ENCODE measurements at regions of chr22 and their contacts with region 1.

Region 1: GRCh38 chr22:43230971-43231723 is 44.2 kb upstream of the TTLL12 start:
- DNase-seq: no peak
- ATAC-seq: peak; percentile 84
- H3K4me3 ChIP-seq: no peak overlapping the region
- H3K27ac ChIP-seq: no peak overlapping the region
- H3K4me1 ChIP-seq: no peaks in the 10 kb centered on the region
- H3K27me3 ChIP-seq: peaks cover 5 to 6% of the 10 kb centered on the region in 2 experiments; a peak in 3 of 4 replicates
- CTCF ChIP-seq: peak; percentile 92 to 97 (median 94)
- EP300 ChIP-seq: no peak
- POLR2A ChIP-seq: no peak
- RAD21 ChIP-seq: peak; percentile 97

Region 2: GRCh38 chr22:43346521-43346929 is 115.4 kb after region 1 on chr22:
- CTCF ChIA-PET with region 1: interaction called, 37 read pairs
- POLR2A ChIA-PET with region 1: interaction called, 4 read pairs
- RAD21 ChIA-PET with region 1: interaction called, 22 read pairs
- SMC1A ChIA-PET with region 1: interaction called, 6 read pairs
- in situ Hi-C with region 1: loop called (anchors 5 kb)
- intact Hi-C with region 1: loop called (anchors 1 kb)
- DNase-seq: no peak
- ATAC-seq: peak; percentile 95
- H3K4me3 ChIP-seq: no peak overlapping the region
- H3K27ac ChIP-seq: no peak overlapping the region
- H3K4me1 ChIP-seq: peaks cover 7% of the 10 kb centered on the region
- H3K27me3 ChIP-seq: peaks cover 7% of the 10 kb centered on the region in 2 experiments; a peak in 3 of 4 replicates
- CTCF ChIP-seq: peak; percentile 69 to 80 (median 70)
- EP300 ChIP-seq: no peak
- POLR2A ChIP-seq: no peak
- RAD21 ChIP-seq: peak; percentile 54

Region 3: DNA sequence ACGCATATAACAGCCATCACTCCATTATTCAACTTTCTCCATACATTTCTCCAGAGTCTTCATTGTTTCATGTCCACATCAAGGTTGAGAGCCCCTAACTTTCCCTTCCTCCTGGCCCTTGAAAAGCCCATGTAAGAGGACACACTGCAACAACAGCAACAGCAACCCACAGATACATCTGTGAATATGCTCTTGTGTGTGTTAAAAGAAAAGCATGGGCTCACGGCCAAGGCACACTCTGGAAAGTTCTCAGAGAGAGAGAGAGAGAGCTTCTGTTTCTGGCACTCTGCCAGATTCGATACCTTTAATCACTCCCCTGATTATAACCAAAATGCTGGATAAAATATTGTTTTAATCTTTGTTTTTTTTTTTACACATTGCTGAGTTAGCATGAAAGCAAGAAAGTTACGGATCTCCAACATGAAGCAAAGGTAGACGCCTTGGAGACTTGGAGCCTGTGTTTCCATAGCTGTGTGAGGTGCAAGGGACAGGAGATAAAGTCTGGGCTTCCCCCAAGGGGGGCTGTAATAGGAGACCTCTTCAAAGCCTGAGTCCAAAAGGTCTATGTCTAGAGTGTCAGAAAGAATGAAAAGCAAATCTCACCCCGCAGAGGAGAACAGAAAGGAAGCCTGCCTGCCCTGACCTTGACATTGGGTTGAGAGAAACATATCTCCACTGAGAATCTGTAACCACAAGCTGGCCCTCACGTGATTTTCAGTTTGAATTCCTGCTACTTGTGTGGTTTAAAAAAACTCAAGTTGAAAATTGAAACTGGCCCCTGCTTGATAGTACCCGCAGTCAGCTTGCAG is 147.0 kb after region 1 on chr22:
- CTCF ChIA-PET with region 1: interaction called, 30 read pairs
- POLR2A ChIA-PET with region 1: no interaction called
- RAD21 ChIA-PET with region 1: no interaction called
- SMC1A ChIA-PET with region 1: interaction called, 3 read pairs
- in situ Hi-C with region 1: loop called (anchors 5 kb)
- intact Hi-C with region 1: no loop called
- DNase-seq: peak; percentile 63
- ATAC-seq: peak; percentile 79
- H3K4me3 ChIP-seq: peak overlapping the region; percentile 34; the same call in 1 of the 2 replicates
- H3K27ac ChIP-seq: peak overlapping the region; percentile 45; the same call in 1 of the 2 replicates
- H3K4me1 ChIP-seq: peaks cover 27% of the 10 kb centered on the region
- H3K27me3 ChIP-seq: peaks cover 0 to 2% of the 10 kb centered on the region in 2 experiments; a peak in 2 of 4 replicates
- CTCF ChIP-seq: no peak
- EP300 ChIP-seq: 0 out of 4 replicates have a peak, but pooled peaks of 1 of the 2 experiments have one; percentile 66
- POLR2A ChIP-seq: no peak
- RAD21 ChIP-seq: no peak

Measured in GM12878 (cell line).